Activated T-helper 1 cell treated with anti-CD3 and anti-CD28 coated beads, Interleukin-12 subunit alpha, Interleukin-12 subunit beta, Interleukin-2, Interleukin-4 antibody, amounts not matched to agents 30 ng/mL and 10 ng/mL and 1 ng/mL, durations not matched to agents 14 hours and 24 hours and 36 hours (primary cell): ENCODE measurements at regions of chr1 and their contacts with region 1.

Region 1: GRCh38 chr1:168178638-168179437 is at the start of gene TIPRL:
- DNase-seq: peak; percentile 95
- H3K4me3 Mint-ChIP-seq: no peak within 1 kb of the TSS
- H3K27ac Mint-ChIP-seq: no peak within 1 kb of the TSS
- H3K4me1 Mint-ChIP-seq: no peaks in the 10 kb centered on the region
- H3K27me3 Mint-ChIP-seq: no peaks in the 10 kb centered on the region
- total RNA-seq, gene TIPRL: 42.8 and 45.7 TPM in 2 replicates

Region 2: DNA sequence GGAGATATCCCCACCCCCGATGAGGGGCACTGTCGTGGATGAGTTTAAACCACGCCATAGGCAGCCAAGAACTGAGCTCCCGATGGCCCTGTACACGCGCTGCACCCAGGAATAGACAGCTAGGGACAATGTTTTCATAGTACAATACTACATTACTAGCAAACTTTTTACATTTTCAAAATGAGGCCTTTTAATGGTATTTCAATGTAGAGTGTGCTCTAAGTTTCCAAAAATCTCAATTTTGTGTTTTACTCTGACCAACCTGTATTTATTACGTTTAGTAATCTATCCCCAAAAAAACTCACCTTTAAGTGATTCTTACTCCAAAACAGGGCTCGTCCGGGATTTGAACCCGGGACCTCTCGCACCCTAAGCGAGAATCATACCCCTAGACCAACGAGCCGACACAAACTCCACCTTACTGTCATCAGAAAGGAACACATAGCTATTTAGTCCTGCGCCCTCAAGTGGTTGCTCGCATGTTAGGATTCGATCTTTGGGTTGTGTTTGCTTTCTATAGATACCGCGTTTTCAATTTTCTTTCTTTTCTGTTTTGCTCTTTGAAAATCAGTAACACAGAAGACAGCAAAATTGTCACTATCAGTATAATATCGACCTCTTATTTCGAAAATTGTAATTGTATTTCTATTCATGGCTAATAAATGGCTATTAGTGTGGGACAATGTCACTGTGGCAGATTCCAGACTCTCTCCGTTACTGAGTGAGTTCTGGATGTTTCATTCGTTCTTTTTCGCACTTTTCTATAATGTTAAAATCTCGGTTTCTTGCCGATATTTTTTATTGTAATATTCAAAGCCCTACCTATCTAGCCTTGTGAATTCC is 463.5 kb before region 1 on chr1:
- intact Hi-C with region 1: loop called (anchors 1 kb)
- DNase-seq: peak; percentile 84
- H3K4me3 Mint-ChIP-seq: peak overlapping the region; percentile 96
- H3K27ac Mint-ChIP-seq: peak overlapping the region; percentile 91
- H3K4me1 Mint-ChIP-seq: peaks cover 61% of the 10 kb centered on the region
- H3K27me3 Mint-ChIP-seq: peaks cover 21% of the 10 kb centered on the region

Region 3: DNA sequence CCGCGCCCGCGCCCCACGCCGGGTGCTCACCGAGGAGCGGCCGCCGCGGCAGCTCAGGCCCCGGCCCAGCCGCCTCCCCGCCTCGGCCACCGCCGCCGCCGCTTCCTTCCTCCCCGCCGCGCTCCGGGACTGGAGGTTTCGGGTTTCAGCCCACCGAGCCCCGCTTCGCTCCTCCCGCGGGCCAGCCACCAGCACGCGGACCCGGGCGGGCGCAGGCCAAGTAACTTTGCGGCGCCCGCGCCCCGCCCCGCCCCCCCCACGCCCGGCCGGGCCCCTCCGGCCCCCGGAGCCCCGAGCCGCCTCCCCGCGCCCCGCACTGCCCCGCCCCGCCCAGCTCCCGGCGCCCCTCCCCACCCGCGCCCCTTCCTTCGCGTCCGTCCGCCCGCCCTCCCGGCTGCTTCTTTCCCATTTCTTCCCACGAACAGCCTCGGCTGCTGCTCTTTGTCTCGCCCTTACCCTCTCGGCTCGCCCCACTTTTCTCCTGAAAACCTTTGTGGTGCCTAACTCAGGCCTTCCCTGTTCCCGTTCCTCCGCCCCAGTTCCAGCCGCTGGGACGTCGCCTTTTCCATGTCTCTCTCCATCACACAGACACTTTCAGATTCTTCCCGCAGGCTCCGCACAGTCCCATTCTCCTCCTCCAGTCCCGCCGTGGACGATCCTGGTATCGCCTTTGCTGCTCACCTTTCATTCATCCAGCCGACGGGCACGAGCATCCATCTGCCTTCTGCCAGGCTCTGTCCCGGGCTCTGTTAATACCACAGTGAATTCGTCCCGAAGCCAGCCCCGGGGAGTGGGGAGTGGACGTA is 41.9 kb before region 1 on chr1 and contains the start of gene GPR161:
- intact Hi-C with region 1: loop called (anchors 1 kb)
- DNase-seq: no peak
- H3K4me3 Mint-ChIP-seq: peak within 1 kb of the TSS; percentile 85
- H3K27ac Mint-ChIP-seq: peak within 1 kb of the TSS; percentile 71
- H3K4me1 Mint-ChIP-seq: peaks cover 26% of the 10 kb centered on the region
- H3K27me3 Mint-ChIP-seq: peaks cover 53% of the 10 kb centered on the region
- total RNA-seq, gene GPR161: 0.41 and 0.42 TPM in 2 replicates

Region 4: DNA sequence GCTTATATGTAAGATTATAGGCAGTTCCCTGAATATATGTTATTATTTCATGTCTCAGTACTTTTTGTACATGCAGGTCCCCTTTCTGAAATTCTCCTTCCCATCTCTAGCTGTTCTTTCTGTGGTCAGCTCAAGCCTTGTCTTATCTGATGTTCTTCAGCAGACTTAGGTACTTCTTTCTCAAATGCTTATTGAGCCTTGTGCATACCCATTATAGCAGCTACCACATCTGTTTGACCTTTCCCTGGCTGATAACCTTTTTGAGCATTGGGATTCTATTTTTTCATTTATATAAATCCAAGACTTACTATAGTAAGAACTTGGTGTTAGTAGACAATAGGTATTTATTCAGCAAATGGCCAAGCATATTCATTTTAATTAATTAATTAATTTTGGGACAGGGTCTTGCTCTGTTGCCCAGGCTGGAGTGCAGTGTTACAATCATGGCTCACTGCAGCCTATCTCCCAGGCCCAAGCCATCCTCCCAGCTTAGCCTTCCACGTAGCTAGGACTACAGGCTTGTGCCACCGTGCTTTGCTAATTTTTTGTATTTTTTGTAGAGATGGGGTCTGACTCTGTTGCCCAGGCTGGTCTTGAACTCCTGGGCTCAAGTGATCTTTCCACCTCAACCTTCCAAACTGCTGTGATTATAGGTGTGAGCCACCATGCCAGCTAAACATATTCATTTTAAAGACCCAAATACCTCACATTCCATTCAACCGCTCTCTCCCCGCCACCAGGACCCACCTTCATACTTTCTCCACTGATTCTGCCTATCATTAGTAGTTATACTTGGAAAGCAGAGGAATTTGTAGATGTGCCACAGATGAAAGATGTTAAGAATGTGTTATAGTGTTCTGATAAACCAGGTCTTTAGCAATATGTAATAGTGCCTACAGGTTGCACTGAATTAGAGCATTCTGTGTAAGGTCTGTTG is 16.6 kb after region 1 on chr1:
- intact Hi-C with region 1: loop called (anchors 2 kb)
- DNase-seq: no peak
- H3K4me3 Mint-ChIP-seq: no peak overlapping the region
- H3K27ac Mint-ChIP-seq: peak overlapping the region; percentile 10
- H3K4me1 Mint-ChIP-seq: peaks cover 13% of the 10 kb centered on the region
- H3K27me3 Mint-ChIP-seq: no peaks in the 10 kb centered on the region

Region 5: GRCh38 chr1:168321945-168322344 is 143.1 kb after region 1 on chr1:
- intact Hi-C with region 1: loop called (anchors 2 kb)
- DNase-seq: no peak
- H3K4me3 Mint-ChIP-seq: no peak overlapping the region
- H3K27ac Mint-ChIP-seq: no peak overlapping the region
- H3K4me1 Mint-ChIP-seq: peaks cover 21% of the 10 kb centered on the region
- H3K27me3 Mint-ChIP-seq: peaks cover 2% of the 10 kb centered on the region

Region 6: GRCh38 chr1:169694304-169695075 is 1515.7 kb after region 1 on chr1:
- intact Hi-C with region 1: loop called (anchors 5 kb)
- DNase-seq: peak; percentile 56
- H3K4me3 Mint-ChIP-seq: peak overlapping the region; percentile 28
- H3K27ac Mint-ChIP-seq: peak overlapping the region; percentile 90
- H3K4me1 Mint-ChIP-seq: peaks cover 96% of the 10 kb centered on the region
- H3K27me3 Mint-ChIP-seq: no peaks in the 10 kb centered on the region